ENCODE measurements at regions of chr7 and their contacts with region 1.

Region 1: DNA sequence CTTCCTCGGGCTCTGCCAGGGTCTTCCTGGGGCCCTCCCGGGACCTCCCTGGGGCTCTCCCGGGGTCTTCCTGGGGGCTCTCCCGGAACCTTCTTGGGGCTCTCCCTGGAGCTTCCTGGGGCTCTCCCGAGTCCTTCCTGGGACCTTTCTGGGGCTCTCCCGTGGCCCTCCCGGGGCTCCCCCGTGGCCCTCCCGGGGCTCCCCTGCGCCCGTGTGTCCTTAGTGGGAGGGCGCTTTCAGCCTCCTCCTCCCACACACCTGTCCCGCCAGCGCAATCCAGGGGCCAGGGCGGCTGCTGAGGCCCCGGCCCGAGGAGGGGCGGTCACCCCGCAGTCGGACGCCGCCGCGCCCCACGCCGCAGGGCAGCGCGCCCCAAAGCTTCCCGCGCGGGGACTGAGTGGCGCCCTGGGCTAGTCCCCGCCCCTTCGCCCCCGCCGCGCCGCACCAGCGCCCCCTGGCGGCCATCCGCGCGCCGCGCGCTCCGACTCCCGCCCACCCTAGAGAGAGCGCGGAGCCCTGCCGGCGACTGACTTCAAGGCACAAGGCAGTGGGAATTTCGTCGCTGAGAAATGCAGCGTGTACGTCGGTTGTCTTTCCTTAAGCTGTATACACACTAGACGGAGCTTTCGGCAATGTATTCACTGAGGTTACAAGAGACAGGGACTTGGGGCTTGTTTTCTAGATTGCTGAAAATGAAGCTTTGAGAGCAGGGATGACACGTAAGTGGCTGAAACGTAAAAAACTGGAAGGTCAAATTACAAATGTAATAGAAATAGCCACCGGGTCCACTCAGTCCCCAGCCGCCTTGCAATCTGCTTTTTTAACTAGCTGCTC is 47.1 kb downstream of the INSIG1 start:
- DNase-seq: peak; percentile 78 to 93
- ATAC-seq: peak; percentile 94
- H3K4me3 ChIP-seq: no peak overlapping the region
- H3K27ac ChIP-seq: no peak overlapping the region
- H3K4me1 ChIP-seq: no peaks in the 10 kb centered on the region
- H3K27me3 ChIP-seq: no peaks in the 10 kb centered on the region

Region 2: GRCh38 chr7:154913638-154914312 is 431.0 kb before region 1 on chr7:
- intact Hi-C with region 1: loop called in 1 of 2 experiments (anchors 5 kb)
- DNase-seq: peak; percentile 89 to 98
- ATAC-seq: peak; percentile 88
- H3K4me3 ChIP-seq: no peak overlapping the region
- H3K27ac ChIP-seq: no peak overlapping the region
- H3K4me1 ChIP-seq: no peaks in the 10 kb centered on the region
- H3K27me3 ChIP-seq: no peaks in the 10 kb centered on the region

Region 3: GRCh38 chr7:155190688-155191087 is 154.1 kb before region 1 on chr7:
- intact Hi-C with region 1: loop called (anchors 1 kb)
- DNase-seq: peak in 1 of 2 donors; percentile 89
- ATAC-seq: peak; percentile 78
- H3K4me3 ChIP-seq: no peak overlapping the region
- H3K27ac ChIP-seq: no peak overlapping the region
- H3K4me1 ChIP-seq: no peaks in the 10 kb centered on the region
- H3K27me3 ChIP-seq: no peaks in the 10 kb centered on the region

Region 4: GRCh38 chr7:155509725-155510551 is 165.1 kb after region 1 on chr7:
- intact Hi-C with region 1: no loop called
- DNase-seq: no peak
- ATAC-seq: no peak
- H3K4me3 ChIP-seq: no peak overlapping the region
- H3K27ac ChIP-seq: no peak overlapping the region
- H3K4me1 ChIP-seq: no peaks in the 10 kb centered on the region
- H3K27me3 ChIP-seq: no peaks in the 10 kb centered on the region